ENCODE measurements at regions of chr6 and their contacts with region 1.

Region 1: GRCh38 chr6:26196846-26197648 is 109.8 kb downstream of the HFE start:
- DNase-seq: peak; percentile 75
- ATAC-seq: peak; percentile 43
- H3K4me3 Mint-ChIP-seq: peak overlapping the region; percentile 99
- H3K27ac Mint-ChIP-seq: peak overlapping the region; percentile 100
- H3K4me1 Mint-ChIP-seq: peaks cover 39% of the 10 kb centered on the region
- H3K27me3 Mint-ChIP-seq: no peaks in the 10 kb centered on the region
- CTCF ChIP-seq: no peak

Region 2: DNA sequence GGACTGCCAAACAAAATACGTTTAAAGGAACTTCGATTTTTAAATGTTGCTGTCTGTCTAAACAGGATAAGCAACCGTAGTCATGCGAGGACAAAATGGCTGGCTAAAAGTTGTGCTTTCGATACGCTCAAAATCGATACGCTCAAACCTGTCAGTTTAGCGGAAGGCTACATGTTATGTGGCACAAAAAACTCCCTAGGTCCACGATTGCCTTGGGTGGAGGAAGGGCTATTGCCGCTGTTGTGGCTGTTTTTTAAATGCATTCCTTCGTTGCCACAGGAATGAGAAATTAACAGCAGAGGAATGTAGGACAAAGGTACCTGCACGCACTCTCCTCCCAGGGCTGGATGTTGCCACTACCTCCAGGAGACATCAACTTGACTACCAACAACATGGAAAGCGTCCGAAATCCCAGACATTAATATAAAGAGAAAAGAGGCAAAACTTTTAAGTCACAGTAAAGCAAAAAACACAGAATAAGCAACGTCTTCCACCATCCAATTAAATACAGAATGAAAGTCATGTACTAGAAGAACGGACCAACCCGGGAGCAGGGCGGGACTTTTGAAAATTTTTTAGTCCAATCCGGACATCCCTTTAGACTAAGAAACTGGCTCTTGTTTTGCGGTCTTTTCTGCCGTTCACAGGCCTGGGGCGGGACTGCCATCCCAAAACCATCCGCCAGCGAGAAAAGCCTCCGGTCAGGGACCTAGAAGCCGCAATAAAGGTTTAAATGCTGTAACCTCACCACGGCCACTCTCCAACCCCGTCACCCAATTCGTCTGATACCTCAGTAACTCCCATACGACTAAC is 142.0 kb before region 1 on chr6:
- CTCF ChIA-PET with region 1: no interaction called
- POLR2A ChIA-PET with region 1: interaction called, 15 read pairs
- DNase-seq: peak; percentile 74
- ATAC-seq: peak; percentile 66
- H3K4me3 Mint-ChIP-seq: peak overlapping the region; percentile 89
- H3K27ac Mint-ChIP-seq: peak overlapping the region; percentile 98
- H3K4me1 Mint-ChIP-seq: peaks cover 29% of the 10 kb centered on the region
- H3K27me3 Mint-ChIP-seq: no peaks in the 10 kb centered on the region
- CTCF ChIP-seq: no peak

Region 3: DNA sequence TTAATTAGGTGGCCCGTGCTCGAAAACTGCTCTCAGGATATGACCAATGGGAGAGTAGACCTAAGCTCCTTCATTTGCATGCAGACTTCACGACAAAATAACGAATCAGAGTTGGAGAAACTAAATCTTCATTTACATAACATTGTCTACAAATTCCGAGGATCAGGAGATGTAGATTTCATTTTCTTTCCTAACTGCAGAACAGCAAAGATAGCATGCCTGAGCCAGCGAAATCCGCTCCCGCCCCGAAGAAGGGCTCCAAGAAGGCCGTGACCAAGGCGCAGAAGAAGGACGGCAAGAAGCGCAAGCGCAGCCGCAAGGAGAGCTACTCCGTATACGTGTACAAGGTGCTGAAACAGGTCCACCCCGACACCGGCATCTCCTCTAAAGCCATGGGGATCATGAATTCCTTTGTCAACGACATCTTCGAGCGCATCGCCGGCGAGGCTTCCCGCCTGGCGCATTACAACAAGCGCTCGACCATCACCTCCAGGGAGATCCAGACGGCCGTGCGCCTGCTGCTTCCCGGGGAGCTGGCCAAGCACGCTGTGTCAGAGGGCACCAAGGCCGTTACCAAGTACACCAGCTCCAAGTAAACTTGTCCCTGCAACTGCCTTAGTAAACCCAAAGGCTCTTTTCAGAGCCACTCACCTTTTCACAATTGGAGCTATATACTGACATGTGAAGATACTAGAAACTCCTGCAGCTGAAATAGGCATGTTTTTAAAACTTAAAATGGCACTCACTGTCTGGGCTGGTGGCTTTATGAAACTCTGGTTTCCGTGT is 13.3 kb before region 1 on chr6:
- CTCF ChIA-PET with region 1: interaction called, 14 read pairs
- POLR2A ChIA-PET with region 1: interaction called, 471 read pairs
- DNase-seq: peak; percentile 74
- ATAC-seq: peak; percentile 78
- H3K4me3 Mint-ChIP-seq: peak overlapping the region; percentile 90
- H3K27ac Mint-ChIP-seq: peak overlapping the region; percentile 99
- H3K4me1 Mint-ChIP-seq: peaks cover 45% of the 10 kb centered on the region
- H3K27me3 Mint-ChIP-seq: no peaks in the 10 kb centered on the region
- CTCF ChIP-seq: no peak

Region 4: DNA sequence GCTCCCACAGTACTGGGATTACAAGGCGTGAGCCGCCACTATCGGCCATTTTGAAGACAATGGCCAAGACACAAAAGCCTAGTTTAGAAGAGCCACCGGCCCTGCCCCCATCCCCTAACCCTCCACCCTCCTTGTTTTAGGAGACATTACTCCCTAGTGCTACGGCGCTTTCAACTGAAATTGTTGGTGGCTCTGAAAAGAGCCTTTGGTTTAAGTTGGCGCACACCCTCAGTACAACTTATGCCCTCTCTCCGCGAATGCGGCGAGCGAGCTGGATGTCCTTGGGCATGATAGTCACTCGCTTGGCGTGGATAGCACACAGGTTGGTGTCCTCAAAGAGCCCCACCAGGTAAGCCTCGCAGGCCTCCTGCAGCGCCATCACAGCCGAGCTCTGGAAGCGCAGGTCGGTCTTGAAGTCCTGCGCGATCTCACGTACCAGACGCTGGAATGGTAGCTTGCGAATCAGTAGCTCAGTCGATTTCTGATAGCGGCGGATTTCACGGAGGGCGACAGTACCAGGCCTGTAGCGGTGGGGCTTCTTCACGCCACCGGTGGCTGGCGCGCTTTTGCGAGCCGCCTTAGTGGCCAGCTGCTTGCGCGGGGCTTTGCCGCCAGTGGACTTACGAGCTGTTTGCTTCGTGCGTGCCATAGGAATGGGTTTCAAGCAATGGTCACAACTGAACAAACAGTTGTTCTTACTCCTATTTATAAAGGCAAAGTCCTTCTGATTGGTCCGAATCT is 53.1 kb after region 1 on chr6:
- CTCF ChIA-PET with region 1: no interaction called
- POLR2A ChIA-PET with region 1: interaction called, 84 read pairs
- DNase-seq: peak; percentile 74
- ATAC-seq: peak; percentile 53
- H3K4me3 Mint-ChIP-seq: peak overlapping the region; percentile 96
- H3K27ac Mint-ChIP-seq: peak overlapping the region; percentile 98
- H3K4me1 Mint-ChIP-seq: peaks cover 27% of the 10 kb centered on the region
- H3K27me3 Mint-ChIP-seq: no peaks in the 10 kb centered on the region
- CTCF ChIP-seq: no peak

Region 5: GRCh38 chr6:26304797-26305640 is 108.0 kb after region 1 on chr6:
- CTCF ChIA-PET with region 1: no interaction called
- POLR2A ChIA-PET with region 1: no interaction called
- DNase-seq: peak; percentile 83
- ATAC-seq: peak; percentile 91
- H3K4me3 Mint-ChIP-seq: peak overlapping the region; percentile 93
- H3K27ac Mint-ChIP-seq: peak overlapping the region; percentile 88
- H3K4me1 Mint-ChIP-seq: peaks cover 11% of the 10 kb centered on the region
- H3K27me3 Mint-ChIP-seq: 0 out of 2 replicates have a peak, but pooled peaks cover 3% of the 10 kb centered on the region
- CTCF ChIP-seq: no peak

Region 6: GRCh38 chr6:27146706-27147505 is 949.9 kb after region 1 on chr6:
- CTCF ChIA-PET with region 1: no interaction called
- POLR2A ChIA-PET with region 1: interaction called, 39 read pairs
- DNase-seq: peak; percentile 80
- ATAC-seq: peak; percentile 67
- H3K4me3 Mint-ChIP-seq: no peak overlapping the region
- H3K27ac Mint-ChIP-seq: no peak overlapping the region
- H3K4me1 Mint-ChIP-seq: peaks cover 23% of the 10 kb centered on the region
- H3K27me3 Mint-ChIP-seq: no peaks in the 10 kb centered on the region
- CTCF ChIP-seq: no peak

Region 7: GRCh38 chr6:27871924-27872638 is 1675.0 kb after region 1 on chr6:
- CTCF ChIA-PET with region 1: no interaction called
- POLR2A ChIA-PET with region 1: interaction called, 37 read pairs
- DNase-seq: peak; percentile 79
- ATAC-seq: peak; percentile 58
- H3K4me3 Mint-ChIP-seq: peak overlapping the region; percentile 94
- H3K27ac Mint-ChIP-seq: peak overlapping the region; percentile 99
- H3K4me1 Mint-ChIP-seq: peaks cover 50% of the 10 kb centered on the region
- H3K27me3 Mint-ChIP-seq: no peaks in the 10 kb centered on the region
- CTCF ChIP-seq: no peak